Astrocyte of the cerebellum (primary cell): ENCODE measurements at regions of chr2 and their contacts with region 1.

Region 1: GRCh38 chr2:219054956-219055903 is 5.5 kb downstream of the IHH start:
- DNase-seq: no peak
- H3K4me3 ChIP-seq: no peak overlapping the region
- CTCF ChIP-seq: no peak

Region 2: DNA sequence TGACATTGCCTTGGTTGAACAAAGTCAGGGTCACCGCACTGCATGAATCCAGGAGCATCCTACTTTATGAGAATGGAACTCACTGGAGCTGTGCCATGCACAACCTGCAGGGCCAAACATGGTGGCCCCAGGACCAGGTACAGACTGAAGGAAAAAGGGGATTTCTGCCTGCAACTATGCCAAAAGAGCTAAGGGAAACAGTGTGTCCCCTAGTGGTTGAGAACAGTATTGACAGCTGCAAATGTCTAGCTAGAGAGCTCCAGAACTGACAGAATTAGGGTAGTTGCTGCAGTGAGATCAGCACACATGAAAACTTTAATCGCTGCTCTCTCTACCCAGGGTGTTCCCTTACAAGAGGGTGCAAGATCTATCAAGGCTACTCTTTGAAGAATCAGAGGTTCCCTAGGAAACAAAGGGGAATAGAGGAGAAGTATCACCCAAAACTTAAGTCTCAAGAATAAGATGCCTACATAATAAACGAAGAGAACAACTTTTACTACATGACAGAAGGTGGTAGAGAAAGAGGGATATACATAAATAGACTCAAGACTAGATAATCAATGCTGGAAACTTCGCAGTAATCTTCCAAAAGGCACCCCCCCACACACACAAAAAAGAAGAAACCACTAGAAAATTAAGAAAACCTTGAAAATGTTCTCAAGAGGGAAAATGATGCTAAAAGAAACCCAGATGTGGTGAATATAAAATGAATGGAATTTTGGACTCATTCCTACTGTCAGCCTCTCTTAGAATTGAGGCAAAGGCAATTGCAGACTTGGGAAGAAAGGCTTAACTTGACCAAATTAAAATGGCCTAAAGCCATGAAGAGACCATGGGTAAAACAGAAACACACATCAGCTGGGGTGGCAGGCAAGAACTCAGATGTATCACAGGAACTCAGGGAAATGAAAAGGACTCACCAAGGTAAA is 49.1 kb after region 1 on chr2:
- in situ Hi-C with region 1: loop called (anchors 5 kb)
- DNase-seq: peak; percentile 53
- H3K4me3 ChIP-seq: no peak overlapping the region
- CTCF ChIP-seq: peak; percentile 88

Region 3: DNA sequence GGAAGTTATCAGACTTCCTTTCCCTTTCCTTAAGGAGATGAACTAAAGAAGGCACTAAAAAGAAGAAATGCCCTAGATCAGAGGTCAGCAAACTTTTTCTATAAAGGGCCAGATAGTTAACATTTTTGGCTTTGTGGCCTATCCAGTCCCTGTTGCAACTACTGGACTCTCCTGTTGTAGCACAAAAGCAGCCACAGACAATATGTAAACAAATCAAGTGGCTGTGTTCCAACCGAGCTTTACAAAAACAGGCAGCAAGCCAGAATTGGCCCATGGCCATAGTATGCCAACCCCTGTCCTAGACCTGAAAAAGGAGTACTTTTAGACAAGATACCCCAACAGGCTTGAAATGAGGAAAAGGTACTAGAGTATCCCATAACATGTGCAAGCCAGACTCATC is 94.4 kb after region 1 on chr2:
- in situ Hi-C with region 1: loop called (anchors 5 kb)
- DNase-seq: no peak
- H3K4me3 ChIP-seq: no peak overlapping the region
- CTCF ChIP-seq: no peak

Region 4: DNA sequence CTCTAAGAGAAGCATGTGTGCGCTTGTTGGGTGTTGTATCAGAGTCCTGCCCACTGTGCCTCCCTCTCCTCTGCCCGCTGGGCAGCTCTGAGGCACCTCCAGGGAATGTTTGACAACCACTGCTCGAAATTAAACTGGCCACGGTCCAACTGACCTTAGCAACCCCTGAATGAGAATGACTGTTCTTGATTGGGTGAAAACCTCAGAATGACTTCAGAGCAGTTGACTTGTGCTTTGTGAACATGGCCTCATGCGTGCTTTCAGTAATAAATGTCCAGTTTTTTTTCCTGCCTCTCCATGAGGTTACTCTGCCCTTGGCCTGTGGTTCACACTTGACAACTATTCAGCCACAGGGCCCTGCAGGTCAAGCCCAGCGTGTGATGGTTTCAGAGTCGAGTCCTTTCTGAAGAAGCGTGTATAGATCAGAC is 667.1 kb after region 1 on chr2:
- in situ Hi-C with region 1: no loop called
- DNase-seq: no peak
- H3K4me3 ChIP-seq: no peak overlapping the region
- CTCF ChIP-seq: no peak